ENCODE measurements at regions of chr11 and their contacts with region 1.

Region 1: DNA sequence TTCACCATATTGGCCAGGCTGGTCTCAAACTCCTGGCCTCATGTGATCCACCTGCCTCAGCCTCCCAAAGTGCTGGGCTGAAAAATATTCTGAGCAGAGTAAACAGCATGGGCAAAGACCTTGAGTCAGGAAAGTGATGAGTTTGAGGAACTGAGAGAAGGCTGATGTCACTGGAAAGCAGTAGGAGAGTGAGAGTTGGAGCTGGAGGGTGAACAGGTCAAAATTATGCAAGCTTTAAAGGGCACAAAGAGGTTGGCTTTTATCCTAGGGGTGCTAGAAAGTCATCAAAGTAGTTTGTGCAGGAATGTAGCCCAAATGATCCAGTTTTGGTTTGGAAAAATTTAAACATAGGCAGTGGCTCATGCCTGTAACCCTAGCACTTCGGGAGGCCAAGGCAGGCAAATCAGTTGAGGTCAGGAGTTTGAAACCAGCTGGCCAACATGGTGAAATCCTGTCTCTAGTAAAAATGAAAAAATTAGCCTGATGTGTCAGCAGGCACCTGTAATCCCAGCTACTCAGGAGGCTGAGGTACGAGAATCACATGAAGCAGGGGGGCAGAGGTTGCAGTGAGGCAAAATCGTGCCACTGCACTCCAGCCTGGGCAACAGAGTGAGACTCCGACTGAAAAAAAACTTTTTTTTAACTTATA is 44.7 kb upstream of the CXCR5 start:
- DNase-seq: peak; percentile 72
- ATAC-seq: peak; percentile 85
- H3K4me3 ChIP-seq: no peak overlapping the region
- H3K4me3 Mint-ChIP-seq: peak overlapping the region; percentile 71
- H3K27ac ChIP-seq: peak overlapping the region; percentile 25 to 44
- H3K27ac Mint-ChIP-seq: peak overlapping the region; percentile 79
- H3K4me1 ChIP-seq: peaks cover 27 to 40% of the 10 kb centered on the region in 2 donors
- H3K4me1 Mint-ChIP-seq: peaks cover 41% of the 10 kb centered on the region
- H3K27me3 ChIP-seq: no peaks in the 10 kb centered on the region
- H3K27me3 Mint-ChIP-seq: no peaks in the 10 kb centered on the region
- CTCF ChIP-seq: no peak

Region 2: DNA sequence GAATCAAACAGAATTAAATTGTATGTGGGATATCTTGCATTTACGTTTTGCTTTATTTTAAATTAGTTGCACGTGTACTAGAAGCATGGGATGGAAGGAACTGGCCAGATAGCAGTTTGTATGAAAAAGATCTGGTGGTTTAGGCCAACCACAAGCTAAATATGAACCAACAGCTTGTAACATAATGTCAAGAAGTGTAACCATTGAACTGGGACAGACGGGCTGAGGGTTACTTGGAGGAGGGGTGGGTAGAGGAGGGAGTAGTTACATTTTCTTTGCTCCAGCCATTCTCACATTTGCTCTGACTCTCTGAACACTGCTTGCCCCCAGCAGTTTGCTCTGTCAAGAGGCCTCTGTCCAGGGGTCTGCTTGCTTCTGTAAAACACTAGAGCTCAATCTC is 12.9 kb after region 1 on chr11:
- CTCF ChIA-PET with region 1: no interaction called
- POLR2A ChIA-PET with region 1: interaction called, 6 read pairs
- intact Hi-C with region 1: loop called (anchors 1 kb)
- DNase-seq: peak; percentile 64
- ATAC-seq: peak; percentile 83
- H3K4me3 ChIP-seq: peak overlapping the region in 1 of 5 experiments; percentile 27
- H3K4me3 Mint-ChIP-seq: peak overlapping the region; percentile 60
- H3K27ac ChIP-seq: peak overlapping the region in 1 of 2 donors; percentile 5
- H3K27ac Mint-ChIP-seq: peak overlapping the region; percentile 81
- H3K4me1 ChIP-seq: peaks cover 21 to 23% of the 10 kb centered on the region in 2 donors
- H3K4me1 Mint-ChIP-seq: peaks cover 33% of the 10 kb centered on the region
- H3K27me3 ChIP-seq: no peaks in the 10 kb centered on the region
- H3K27me3 Mint-ChIP-seq: no peaks in the 10 kb centered on the region
- CTCF ChIP-seq: no peak

Measured in B cell (primary cell).